ENCODE measurements at regions of chr2 and their contacts with region 1.

Region 1: GRCh38 chr2:19504400-19505198 is 146.2 kb upstream of the OSR1 start:
- DNase-seq: peak; percentile 96
- ATAC-seq: peak; percentile 91
- H3K4me3 ChIP-seq: peak overlapping the region in 2 of 3 experiments; percentile 46 to 63; a peak in 3 of 6 replicates
- H3K27ac ChIP-seq: peak overlapping the region; percentile 88
- H3K4me1 ChIP-seq: peaks cover 46% of the 10 kb centered on the region
- H3K27me3 ChIP-seq: no peaks in the 10 kb centered on the region
- CTCF ChIP-seq: no peak
- EP300 ChIP-seq: peak in 1 of 2 experiments; percentile 85; a peak in 2 of 4 replicates
- POLR2A ChIP-seq: peak; percentile 45 to 50; a peak in 2 of 4 replicates
- RAD21 ChIP-seq: no peak

Region 2: DNA sequence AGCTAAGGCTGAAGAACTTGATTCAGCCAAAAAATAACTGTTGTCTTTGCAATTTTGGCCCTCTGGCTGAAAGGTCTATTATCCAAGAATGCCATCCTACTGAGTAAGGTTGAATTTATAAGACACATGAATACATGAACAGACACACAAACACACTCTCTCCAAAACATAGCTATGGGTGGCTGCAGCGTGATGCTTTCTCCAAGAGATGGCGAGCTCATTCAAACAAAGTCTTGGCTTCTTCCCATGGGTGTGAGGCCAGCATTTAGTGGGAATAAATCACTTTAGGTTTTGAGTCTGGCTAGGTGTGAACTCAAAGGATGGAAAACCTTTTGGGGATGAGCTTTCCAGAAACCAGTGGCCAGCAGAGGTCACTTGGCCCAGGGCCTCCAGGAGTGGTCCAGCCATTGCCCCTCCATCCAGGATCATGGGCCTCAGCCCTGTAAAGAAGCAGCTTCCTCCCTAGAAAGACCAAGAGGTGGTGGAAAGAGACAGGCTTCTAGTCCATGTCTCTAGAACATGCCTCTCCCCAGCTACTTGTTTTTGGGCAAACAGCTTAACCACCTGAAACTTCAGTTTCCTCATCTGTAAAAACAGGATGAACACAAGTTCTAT is 135.2 kb before region 1 on chr2:
- CTCF ChIA-PET with region 1: no interaction called
- POLR2A ChIA-PET with region 1: no interaction called
- in situ Hi-C with region 1: no loop called
- intact Hi-C with region 1: loop called (anchors 5 kb)
- DNase-seq: peak; percentile 23
- ATAC-seq: peak; percentile 70
- H3K4me3 ChIP-seq: no peak overlapping the region
- H3K27ac ChIP-seq: no peak overlapping the region
- H3K4me1 ChIP-seq: peaks cover 4% of the 10 kb centered on the region; the same call in 1 of the 2 replicates
- H3K27me3 ChIP-seq: peaks cover 1 to 32% of the 10 kb centered on the region in 2 experiments; a peak in 4 of 5 replicates
- CTCF ChIP-seq: peak; percentile 70
- EP300 ChIP-seq: no peak
- POLR2A ChIP-seq: no peak
- RAD21 ChIP-seq: no peak

Region 3: DNA sequence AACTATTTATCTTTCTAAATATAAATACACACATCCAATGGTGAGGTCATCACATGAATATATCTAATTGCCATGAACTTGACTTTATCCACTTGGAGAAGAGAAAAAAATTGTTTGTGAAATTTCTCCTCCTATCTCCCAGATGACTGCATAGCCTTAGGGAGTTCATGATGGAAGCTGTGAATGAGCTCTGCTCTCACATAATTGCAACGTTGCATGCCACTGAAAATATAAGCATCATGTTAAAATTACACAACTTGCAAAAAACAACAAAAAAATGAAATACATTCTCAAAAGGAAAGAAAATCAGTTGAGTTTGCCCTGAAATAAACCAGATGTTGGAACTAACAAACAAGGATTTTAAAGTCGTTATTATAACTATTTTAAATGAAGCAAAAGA is 95.6 kb before region 1 on chr2:
- CTCF ChIA-PET with region 1: no interaction called
- POLR2A ChIA-PET with region 1: no interaction called
- in situ Hi-C with region 1: no loop called
- intact Hi-C with region 1: loop called (anchors 5 kb)
- DNase-seq: no peak
- ATAC-seq: no peak
- H3K4me3 ChIP-seq: no peak overlapping the region
- H3K27ac ChIP-seq: no peak overlapping the region
- H3K4me1 ChIP-seq: no peaks in the 10 kb centered on the region
- H3K27me3 ChIP-seq: 0 out of 5 replicates have a peak, but pooled peaks cover 0 to 3% of the 10 kb centered on the region in 2 experiments
- CTCF ChIP-seq: no peak
- EP300 ChIP-seq: no peak
- POLR2A ChIP-seq: no peak
- RAD21 ChIP-seq: no peak

Region 4: GRCh38 chr2:19488009-19488691 is 16.4 kb before region 1 on chr2:
- CTCF ChIA-PET with region 1: no interaction called
- POLR2A ChIA-PET with region 1: interaction called, 33 read pairs
- in situ Hi-C with region 1: no loop called
- intact Hi-C with region 1: loop called (anchors 1 kb)
- DNase-seq: peak; percentile 88
- ATAC-seq: peak; percentile 84
- H3K4me3 ChIP-seq: no peak overlapping the region
- H3K27ac ChIP-seq: no peak overlapping the region
- H3K4me1 ChIP-seq: peaks cover 32% of the 10 kb centered on the region
- H3K27me3 ChIP-seq: no peaks in the 10 kb centered on the region
- CTCF ChIP-seq: no peak
- EP300 ChIP-seq: peak in 1 of 2 experiments; percentile 96; a peak in 2 of 4 replicates
- POLR2A ChIP-seq: no peak
- RAD21 ChIP-seq: no peak

Region 5: GRCh38 chr2:19538405-19538963 is 33.9 kb after region 1 on chr2:
- CTCF ChIA-PET with region 1: no interaction called
- POLR2A ChIA-PET with region 1: no interaction called
- in situ Hi-C with region 1: no loop called
- intact Hi-C with region 1: no loop called
- DNase-seq: peak; percentile 71
- ATAC-seq: peak; percentile 87
- H3K4me3 ChIP-seq: no peak overlapping the region
- H3K27ac ChIP-seq: no peak overlapping the region
- H3K4me1 ChIP-seq: peaks cover 6% of the 10 kb centered on the region; the same call in 1 of the 2 replicates
- H3K27me3 ChIP-seq: no peaks in the 10 kb centered on the region
- CTCF ChIP-seq: no peak
- EP300 ChIP-seq: peak in 1 of 2 experiments; percentile 27; a peak in 1 of 4 replicates
- POLR2A ChIP-seq: no peak
- RAD21 ChIP-seq: no peak

Measured in HepG2 (cell line).